ENCODE measurements at regions of chr10 and their contacts with region 1.

Region 1: DNA sequence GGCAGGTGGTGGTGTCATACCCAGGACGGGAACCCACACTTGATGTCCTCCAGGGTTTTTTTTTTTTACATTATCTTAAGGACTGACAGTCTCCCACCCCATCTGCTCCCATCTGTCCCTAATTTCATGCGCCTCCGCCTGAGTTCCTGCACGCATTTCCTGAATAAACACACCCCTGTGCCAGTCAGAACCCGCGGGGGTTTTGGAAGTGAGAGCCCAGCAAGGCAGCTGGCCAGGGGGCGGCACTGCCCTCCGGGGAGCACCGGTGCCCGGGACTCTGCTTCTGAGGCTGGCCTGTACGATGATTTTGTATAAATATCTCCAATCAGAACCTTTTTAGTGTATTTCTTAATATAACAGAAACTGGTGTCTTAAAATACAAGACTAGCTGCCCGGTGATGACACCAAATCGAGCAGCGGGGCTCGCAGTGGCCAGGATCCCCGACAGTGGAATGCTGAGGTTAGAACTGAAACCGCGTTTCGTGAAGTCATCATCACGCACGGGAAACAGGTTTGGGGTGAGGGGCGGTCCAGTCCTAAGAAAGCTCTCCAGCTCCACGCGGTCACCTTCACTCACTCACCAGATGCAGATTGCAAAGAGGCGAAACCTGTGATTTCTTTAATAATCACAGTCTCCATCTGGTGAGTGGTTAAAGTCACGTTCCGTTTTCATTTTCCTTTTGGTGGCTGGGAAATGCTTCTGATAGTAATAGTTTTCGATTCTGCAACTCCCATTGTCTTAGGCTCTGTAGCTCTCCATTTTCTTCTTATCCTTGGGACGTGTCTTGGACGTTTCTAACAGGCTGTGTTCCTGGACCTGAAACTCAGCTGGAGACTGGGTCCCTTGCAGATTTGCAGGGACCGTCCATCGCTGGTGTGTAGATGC is 19.7 kb downstream of the BNIP3 start:
- DNase-seq: peak in 3 of 10 donors; percentile 51 to 66 (median 63)
- H3K4me3 ChIP-seq: peak overlapping the region in 58 of 59 donors; percentile 5 to 63 (median 46)
- H3K27ac ChIP-seq: peak overlapping the region in 54 of 59 donors; percentile 10 to 87 (median 66)
- H3K27me3 ChIP-seq: no peaks in the 10 kb centered on the region
- CTCF ChIP-seq: peak in 3 of 56 donors; percentile 7 to 17 (median 12)

Region 2: GRCh38 chr10:131786756-131787605 is 175.0 kb before region 1 on chr10:
- intact Hi-C with region 1: no loop called
- DNase-seq: peak in 6 of 10 donors; percentile 49 to 83 (median 58)
- H3K4me3 ChIP-seq: no peak overlapping the region
- H3K27ac ChIP-seq: no peak overlapping the region
- H3K27me3 ChIP-seq: peaks cover 0 to 9% (median 0%) of the 10 kb centered on the region in 45 donors
- CTCF ChIP-seq: peak; percentile 78 to 95 (median 88)

Region 3: GRCh38 chr10:131900350-131901146 is 61.5 kb before region 1 on chr10 and contains the start of gene PPP2R2D:
- intact Hi-C with region 1: loop called in 1 of 2 experiments (anchors 5 kb)
- DNase-seq: peak; percentile 86 to 97 (median 94)
- H3K4me3 ChIP-seq: peak within 1 kb of the TSS; percentile 56 to 99 (median 91)
- H3K27ac ChIP-seq: peak within 1 kb of the TSS in 58 of 59 donors; percentile 8 to 95 (median 86)
- H3K27me3 ChIP-seq: no peaks in the 10 kb centered on the region
- CTCF ChIP-seq: peak in 23 of 56 donors; percentile 8 to 49 (median 27)
- total RNA-seq, gene PPP2R2D: 37.7 to 70.2 (median 51.6) TPM

Region 4: DNA sequence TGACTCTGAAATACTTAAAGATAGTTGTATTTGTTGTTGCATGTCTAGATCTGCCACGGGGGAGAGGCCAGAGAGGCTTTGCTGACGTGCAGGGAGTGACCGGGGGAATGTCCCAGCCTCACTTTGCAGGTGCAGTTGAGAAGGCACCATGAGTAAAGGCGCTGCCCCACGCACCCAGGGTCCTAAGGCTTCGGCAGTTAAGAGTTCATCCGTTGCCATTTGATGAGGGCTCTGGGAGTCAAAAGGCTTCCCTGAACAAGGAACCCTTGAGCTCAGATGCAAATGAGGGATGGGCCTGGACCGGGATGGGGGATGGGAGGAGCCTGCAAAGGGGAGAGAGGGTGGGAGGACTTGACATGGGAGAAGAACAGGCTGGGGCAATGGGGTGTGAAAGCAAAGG is 40.8 kb before region 1 on chr10:
- intact Hi-C with region 1: loop called in 1 of 2 experiments (anchors 5 kb)
- DNase-seq: peak in 4 of 10 donors; percentile 40 to 60 (median 50)
- H3K4me3 ChIP-seq: peak overlapping the region in 1 of 59 donors; percentile 0
- H3K27ac ChIP-seq: peak overlapping the region in 51 of 59 donors; percentile 5 to 77 (median 51)
- H3K27me3 ChIP-seq: no peaks in the 10 kb centered on the region
- CTCF ChIP-seq: no peak

Region 5: DNA sequence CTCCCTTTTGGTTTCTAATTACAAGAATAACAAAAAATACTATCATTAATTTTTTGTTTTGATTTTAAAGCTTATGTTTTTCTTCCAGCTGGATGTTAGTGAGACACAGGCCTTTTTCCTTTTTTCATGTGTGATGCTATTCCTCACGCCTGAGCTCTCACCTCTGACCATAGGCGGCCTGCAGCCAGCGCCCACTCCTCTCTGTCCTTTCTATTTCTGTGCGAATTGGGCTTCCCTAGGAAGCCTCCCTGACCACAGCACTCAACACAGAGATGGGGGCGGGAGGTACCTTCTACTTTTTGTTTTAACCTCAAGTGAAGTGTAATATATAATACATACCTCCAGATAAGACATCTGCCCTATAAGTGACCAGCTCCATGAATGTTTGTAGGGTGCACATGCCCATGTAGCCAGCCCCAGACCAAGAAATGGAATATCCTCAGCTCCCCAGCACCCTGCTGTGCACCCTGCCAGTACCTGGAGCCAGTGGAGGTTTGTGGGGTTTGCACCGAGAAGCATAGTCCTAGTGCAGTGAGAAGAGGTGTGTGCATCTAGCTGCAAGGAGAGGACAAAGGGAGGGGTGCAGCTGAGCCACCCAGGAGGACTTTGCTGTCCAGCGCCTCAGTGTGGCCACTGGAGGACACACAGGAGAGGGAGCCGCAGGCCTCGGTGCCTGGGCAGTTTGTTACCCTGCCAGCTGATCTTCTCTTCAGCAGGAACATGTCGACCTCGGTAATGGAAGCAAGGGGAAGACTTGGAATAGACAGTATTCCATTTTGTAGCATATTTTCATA is 18.8 kb before region 1 on chr10:
- intact Hi-C with region 1: no loop called
- DNase-seq: peak in 1 of 10 donors; percentile 50
- H3K4me3 ChIP-seq: no peak overlapping the region
- H3K27ac ChIP-seq: peak overlapping the region in 5 of 59 donors; percentile 3 to 27 (median 10)
- H3K27me3 ChIP-seq: no peaks in the 10 kb centered on the region
- CTCF ChIP-seq: peak in 51 of 56 donors; percentile 16 to 67 (median 41)

Region 6: GRCh38 chr10:131981429-131982184 is 19.6 kb after region 1 on chr10 and contains the start of gene BNIP3:
- intact Hi-C with region 1: loop called in 1 of 2 experiments (anchors 2 kb)
- DNase-seq: peak; percentile 75 to 97 (median 88)
- H3K4me3 ChIP-seq: peak within 1 kb of the TSS; percentile 59 to 99 (median 92)
- H3K27ac ChIP-seq: peak within 1 kb of the TSS in 58 of 59 donors; percentile 20 to 94 (median 81)
- H3K27me3 ChIP-seq: no peaks in the 10 kb centered on the region
- CTCF ChIP-seq: peak in 6 of 56 donors; percentile 7 to 18 (median 11)
- total RNA-seq, gene BNIP3: 73.1 to 211 (median 119) TPM